Calu3 (cell line): ENCODE measurements at regions of chr3 and their contacts with region 1.

Region 1: DNA sequence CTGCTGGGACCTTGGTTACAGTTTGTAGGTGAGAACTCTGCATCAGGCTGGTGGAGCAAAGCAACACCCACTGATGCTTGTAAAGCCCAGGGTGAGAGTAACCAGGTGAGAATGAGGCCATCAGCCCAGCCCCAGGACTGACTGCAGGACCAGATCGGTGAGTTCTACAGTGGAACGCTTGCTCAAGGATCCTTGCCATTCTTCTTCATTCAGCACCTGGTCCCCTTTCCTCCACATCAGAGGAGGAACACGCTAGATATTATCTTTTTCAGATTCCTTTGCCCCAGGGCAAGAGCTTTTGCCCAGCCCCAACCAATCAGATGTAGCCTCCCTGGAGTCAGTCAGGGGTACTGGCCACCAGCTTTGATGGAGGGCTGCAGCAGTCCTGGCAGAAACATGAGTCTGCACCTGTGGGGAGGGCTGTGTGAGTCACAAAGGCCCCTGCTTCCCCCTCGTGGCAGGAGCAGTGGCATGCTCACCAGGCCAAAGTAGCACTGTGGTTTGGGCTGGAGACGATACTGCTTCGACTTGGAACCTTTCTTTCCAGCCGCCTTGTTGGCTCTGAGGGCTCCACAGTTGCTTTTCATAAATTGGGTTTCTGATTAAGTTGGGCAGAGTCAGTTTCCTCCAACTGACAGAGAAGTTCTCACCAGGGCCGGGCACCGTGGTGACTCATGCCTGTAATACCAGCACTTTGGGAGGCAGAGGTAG is 3.5 kb upstream of the SHISA5 start:
- DNase-seq: peak; percentile 84
- H3K4me3 Mint-ChIP-seq: no peak overlapping the region
- H3K27ac Mint-ChIP-seq: peak overlapping the region; percentile 31
- H3K4me1 Mint-ChIP-seq: no peaks in the 10 kb centered on the region
- H3K27me3 Mint-ChIP-seq: no peaks in the 10 kb centered on the region
- CTCF ChIP-seq: no peak

Region 2: GRCh38 chr3:48400824-48401433 is 106.6 kb before region 1 on chr3:
- CTCF ChIA-PET with region 1: no interaction called
- intact Hi-C with region 1: loop called (anchors 5 kb)
- DNase-seq: peak; percentile 60
- H3K4me3 Mint-ChIP-seq: no peak overlapping the region
- H3K27ac Mint-ChIP-seq: peak overlapping the region; percentile 36
- H3K4me1 Mint-ChIP-seq: peaks cover 13% of the 10 kb centered on the region
- H3K27me3 Mint-ChIP-seq: peaks cover 5% of the 10 kb centered on the region
- CTCF ChIP-seq: peak; percentile 66

Region 3: DNA sequence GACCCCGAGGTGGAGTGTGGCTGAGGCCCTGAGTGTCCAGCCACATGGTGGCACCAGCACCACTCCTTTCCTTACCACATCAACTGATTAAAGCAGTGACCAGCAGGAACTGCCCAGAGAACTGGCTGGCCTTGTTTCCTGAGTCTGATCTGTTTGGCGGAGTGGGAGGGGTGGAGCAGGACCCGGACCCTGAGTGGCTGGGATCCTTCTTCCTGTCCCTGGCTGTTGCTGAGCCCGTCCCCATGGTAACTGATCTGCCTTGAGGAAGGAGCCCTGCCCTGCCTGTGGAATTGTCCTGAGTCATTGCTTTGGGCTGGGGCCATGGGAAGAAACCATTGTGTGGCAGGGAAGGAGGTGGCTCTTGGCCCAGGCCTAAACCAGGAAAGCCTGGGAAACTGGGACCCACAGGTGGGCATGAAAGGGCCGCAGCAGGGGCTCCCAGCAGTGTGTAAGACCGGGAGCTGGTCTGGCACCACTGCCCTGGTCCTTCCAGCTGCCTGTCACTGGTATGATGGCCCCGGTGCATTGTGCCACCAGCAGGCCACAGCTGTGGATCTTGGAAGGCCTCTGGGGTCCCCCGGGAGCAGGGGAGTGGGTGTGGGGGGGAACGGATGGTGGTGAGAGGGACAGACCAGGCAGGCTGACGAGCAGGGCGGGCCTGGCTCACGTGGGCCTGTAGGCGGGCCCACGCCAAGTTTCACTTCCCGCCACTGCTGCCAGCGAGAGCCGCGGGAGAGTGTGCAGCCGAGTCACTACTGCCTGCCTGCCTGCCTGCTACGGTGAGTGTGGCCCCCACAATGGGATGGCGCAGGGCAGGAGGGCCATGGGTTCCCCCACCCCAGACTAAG is 41.8 kb before region 1 on chr3:
- CTCF ChIA-PET with region 1: interaction called, 6 read pairs
- intact Hi-C with region 1: loop called (anchors 1 kb)
- DNase-seq: peak; percentile 97
- H3K4me3 Mint-ChIP-seq: peak overlapping the region; percentile 74
- H3K27ac Mint-ChIP-seq: peak overlapping the region; percentile 100
- H3K4me1 Mint-ChIP-seq: peaks cover 18% of the 10 kb centered on the region
- H3K27me3 Mint-ChIP-seq: no peaks in the 10 kb centered on the region
- CTCF ChIP-seq: peak; percentile 73

Region 4: GRCh38 chr3:48472915-48473616 is 34.4 kb before region 1 on chr3:
- CTCF ChIA-PET with region 1: interaction called, 16 read pairs
- intact Hi-C with region 1: loop called (anchors 2 kb)
- DNase-seq: peak; percentile 93
- H3K4me3 Mint-ChIP-seq: peak overlapping the region; percentile 96
- H3K27ac Mint-ChIP-seq: peak overlapping the region; percentile 99
- H3K4me1 Mint-ChIP-seq: peaks cover 12% of the 10 kb centered on the region
- H3K27me3 Mint-ChIP-seq: no peaks in the 10 kb centered on the region
- CTCF ChIP-seq: peak; percentile 46